Mammary epithelial cell (primary cell): ENCODE measurements at regions of chr1 and their contacts with region 1.

Region 1: DNA sequence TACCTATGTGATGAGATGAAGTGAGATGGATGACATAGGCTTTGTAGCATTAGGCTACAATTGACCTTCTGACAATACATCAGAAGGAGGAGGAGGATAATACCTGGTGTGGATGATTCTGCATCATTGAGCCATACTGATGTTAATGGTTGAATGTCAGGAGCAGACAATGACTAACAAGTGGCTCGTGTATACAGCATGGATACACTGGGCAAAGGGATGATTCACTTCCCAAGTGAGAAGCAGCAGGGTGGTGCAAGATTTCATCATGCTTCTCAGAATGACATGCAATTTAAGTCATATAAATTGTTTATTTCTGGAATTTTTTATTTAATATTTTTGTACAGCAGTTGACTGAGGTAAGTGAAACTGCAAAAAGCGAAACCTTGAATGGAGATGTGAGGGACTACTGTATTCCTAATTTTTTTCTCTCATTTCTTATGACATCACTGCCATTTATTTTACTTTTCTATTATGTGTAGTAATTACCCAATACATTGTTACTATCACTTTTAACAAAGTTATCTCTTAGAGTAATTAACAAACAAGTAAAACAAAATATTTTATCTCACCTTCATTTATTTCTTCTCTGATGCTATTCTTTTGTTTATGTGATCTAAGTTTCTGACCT is 34.4 kb upstream of the COP1 start:
- DNase-seq: peak; percentile 89
- H3K4me3 ChIP-seq: no peak overlapping the region
- H3K27ac ChIP-seq: peak overlapping the region; percentile 78
- H3K4me1 ChIP-seq: no peaks in the 10 kb centered on the region
- H3K27me3 ChIP-seq: no peaks in the 10 kb centered on the region
- CTCF ChIP-seq: no peak

Region 2: GRCh38 chr1:174800216-174800851 is 1441.2 kb before region 1 on chr1:
- CTCF ChIA-PET with region 1: no interaction called
- dilution Hi-C with region 1: no loop called
- in situ Hi-C with region 1: no loop called
- intact Hi-C with region 1: no loop called
- DNase-seq: peak; percentile 19
- H3K4me3 ChIP-seq: peak overlapping the region; percentile 47 to 62 (median 59)
- H3K27ac ChIP-seq: peak overlapping the region; percentile 72
- H3K4me1 ChIP-seq: peaks cover 23% of the 10 kb centered on the region
- H3K27me3 ChIP-seq: no peaks in the 10 kb centered on the region
- CTCF ChIP-seq: no peak

Region 3: GRCh38 chr1:176206961-176207902 is 34.3 kb before region 1 on chr1 and contains the start of gene COP1:
- CTCF ChIA-PET with region 1: interaction called, 3 read pairs
- dilution Hi-C with region 1: no loop called
- in situ Hi-C with region 1: no loop called
- intact Hi-C with region 1: loop called (anchors 2 kb)
- DNase-seq: peak; percentile 96
- H3K4me3 ChIP-seq: peak within 1 kb of the TSS; percentile 91 to 99 (median 98)
- H3K27ac ChIP-seq: peak within 1 kb of the TSS; percentile 63
- H3K4me1 ChIP-seq: peaks cover 20% of the 10 kb centered on the region
- H3K27me3 ChIP-seq: no peaks in the 10 kb centered on the region
- CTCF ChIP-seq: no peak
- total RNA-seq, gene COP1: 42.2 to 72.5 TPM